IMR-90 (cell line): ENCODE measurements at regions of chr12 and their contacts with region 1.

Region 1: DNA sequence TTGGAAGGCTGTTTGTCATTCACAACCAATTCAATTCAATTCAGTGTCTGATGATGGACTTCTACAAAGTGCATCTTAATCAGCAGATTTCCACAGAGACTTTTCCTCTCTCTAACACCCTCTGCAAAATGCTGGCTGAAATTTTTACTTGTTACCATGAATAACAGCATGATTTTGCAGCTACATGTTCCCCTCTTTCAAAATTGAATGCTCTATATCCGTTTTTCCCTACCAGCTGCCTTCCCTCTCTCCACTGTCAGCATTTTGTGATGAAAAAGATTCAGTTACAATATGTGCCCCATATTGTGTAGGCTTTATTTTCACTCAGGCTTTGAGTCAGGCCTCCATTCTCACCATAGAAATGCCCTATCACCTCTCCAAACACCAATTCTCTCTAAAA is 334.6 kb downstream of the SYT1 start:
- DNase-seq: no peak
- ATAC-seq: no peak
- H3K4me3 ChIP-seq: no peak overlapping the region
- H3K27ac ChIP-seq: no peak overlapping the region
- H3K4me1 ChIP-seq: no peaks in the 10 kb centered on the region
- H3K27me3 ChIP-seq: no peaks in the 10 kb centered on the region
- CTCF ChIP-seq: no peak
- POLR2A ChIP-seq: no peak
- RAD21 ChIP-seq: no peak

Region 2: GRCh38 chr12:79233341-79233781 is 34.2 kb after region 1 on chr12:
- CTCF ChIA-PET with region 1: no interaction called
- POLR2A ChIA-PET with region 1: no interaction called
- dilution Hi-C with region 1: no loop called
- in situ Hi-C with region 1: no loop called
- intact Hi-C with region 1: loop called (anchors 5 kb)
- DNase-seq: no peak
- ATAC-seq: no peak
- H3K4me3 ChIP-seq: no peak overlapping the region
- H3K27ac ChIP-seq: no peak overlapping the region
- H3K4me1 ChIP-seq: no peaks in the 10 kb centered on the region
- H3K27me3 ChIP-seq: no peaks in the 10 kb centered on the region
- CTCF ChIP-seq: no peak
- POLR2A ChIP-seq: no peak
- RAD21 ChIP-seq: no peak

Region 3: DNA sequence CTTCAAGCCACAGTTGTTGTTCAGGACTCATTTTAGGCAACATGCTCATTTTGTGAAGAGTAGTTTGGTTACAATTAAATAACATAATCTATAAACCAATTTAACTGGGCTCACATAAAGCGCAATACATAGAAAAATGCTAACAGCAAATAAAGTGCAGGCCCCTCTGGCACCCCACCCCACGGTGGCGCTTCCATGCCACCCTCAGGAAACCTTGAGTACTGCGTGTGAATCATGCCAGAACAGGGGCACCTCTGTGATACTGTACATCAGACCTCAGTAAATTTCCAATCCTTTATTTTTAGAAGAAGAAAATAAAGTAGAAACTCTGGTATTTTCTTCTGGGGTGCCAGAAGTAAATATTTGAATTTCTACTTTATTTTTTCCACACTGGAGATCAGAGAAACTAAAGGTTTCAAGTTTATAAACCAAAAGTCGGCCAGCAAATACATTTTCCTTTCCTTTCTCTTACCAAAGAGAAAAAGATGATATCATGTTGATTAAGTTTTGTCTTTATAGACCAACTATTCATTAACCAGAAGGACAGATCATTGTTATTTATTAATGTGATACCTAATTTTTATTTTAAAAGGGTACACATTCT is 174.8 kb after region 1 on chr12:
- CTCF ChIA-PET with region 1: no interaction called
- POLR2A ChIA-PET with region 1: no interaction called
- dilution Hi-C with region 1: no loop called
- in situ Hi-C with region 1: no loop called
- intact Hi-C with region 1: no loop called
- DNase-seq: peak; percentile 23
- ATAC-seq: peak; percentile 90
- H3K4me3 ChIP-seq: no peak overlapping the region
- H3K27ac ChIP-seq: no peak overlapping the region
- H3K4me1 ChIP-seq: no peaks in the 10 kb centered on the region
- H3K27me3 ChIP-seq: no peaks in the 10 kb centered on the region
- CTCF ChIP-seq: peak; percentile 74
- POLR2A ChIP-seq: no peak
- RAD21 ChIP-seq: peak; percentile 87